Vagina (tissue), 2 donors: ENCODE measurements at regions of chr19 and their contacts with region 1.

Region 1: GRCh38 chr19:42081584-42082203 is 5.7 kb downstream of the ZNF574 start:
- DNase-seq: no peak
- H3K4me3 ChIP-seq: no peak overlapping the region
- H3K27ac ChIP-seq: no peak overlapping the region
- H3K4me1 ChIP-seq: peaks cover 16% of the 10 kb centered on the region
- H3K27me3 ChIP-seq: no peaks in the 10 kb centered on the region
- CTCF ChIP-seq: no peak
- POLR2A ChIP-seq: no peak

Region 2: GRCh38 chr19:42105368-42105767 is 23.7 kb after region 1 on chr19:
- intact Hi-C with region 1: loop called (anchors 1 kb)
- DNase-seq: no peak
- H3K4me3 ChIP-seq: no peak overlapping the region
- H3K27ac ChIP-seq: no peak overlapping the region
- H3K4me1 ChIP-seq: no peaks in the 10 kb centered on the region
- H3K27me3 ChIP-seq: no peaks in the 10 kb centered on the region
- CTCF ChIP-seq: no peak
- POLR2A ChIP-seq: no peak